Activated CD4-positive, alpha-beta T cell treated with anti-CD3 and anti-CD28 coated beads, Interleukin-2, amount 10 ng/mL, durations not matched to agents 24 days and 14 days (primary cell): ENCODE measurements at regions of chr15 and their contacts with region 1.

Region 1: DNA sequence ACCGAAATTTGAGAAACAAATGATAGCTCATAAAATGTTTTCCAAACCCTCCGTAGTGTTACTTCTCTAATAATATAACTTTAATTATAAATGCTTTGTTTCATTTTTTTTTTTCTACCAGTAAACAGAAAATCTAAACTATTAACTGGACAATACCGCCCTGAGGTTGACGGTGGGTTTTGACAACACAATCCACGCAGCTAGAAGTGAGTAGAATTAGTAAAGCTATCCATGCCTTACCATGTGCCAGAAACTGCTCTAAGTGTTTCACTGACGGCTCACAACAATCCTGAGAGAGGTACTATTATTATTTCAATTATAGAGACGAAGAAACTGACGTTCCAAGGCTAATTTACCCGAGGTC is 410 bp downstream of the NDUFAF1 start:
- DNase-seq: no peak
- H3K4me3 Mint-ChIP-seq: peak overlapping the region; percentile 93
- H3K27ac Mint-ChIP-seq: peak overlapping the region; percentile 94
- H3K4me1 Mint-ChIP-seq: peaks cover 12% of the 10 kb centered on the region
- H3K27me3 Mint-ChIP-seq: no peaks in the 10 kb centered on the region

Region 2: GRCh38 chr15:41544650-41545015 is 142.7 kb after region 1 on chr15:
- intact Hi-C with region 1: loop called (anchors 1 kb)
- DNase-seq: no peak
- H3K4me3 Mint-ChIP-seq: peak overlapping the region; percentile 98
- H3K27ac Mint-ChIP-seq: no peak overlapping the region
- H3K4me1 Mint-ChIP-seq: peaks cover 13% of the 10 kb centered on the region
- H3K27me3 Mint-ChIP-seq: no peaks in the 10 kb centered on the region